ENCODE measurements at regions of chr12 and their contacts with region 1.

Region 1: GRCh38 chr12:52582971-52583456 is 9.4 kb upstream of the KRT74 start:
- DNase-seq: peak; percentile 52 to 64 (median 62)
- H3K4me3 ChIP-seq: no peak overlapping the region
- H3K4me3 Mint-ChIP-seq: peak overlapping the region in 2 of 8 donors; percentile 27 to 36
- H3K27ac ChIP-seq: no peak overlapping the region
- H3K27ac Mint-ChIP-seq: peak overlapping the region; percentile 8 to 95 (median 73)
- H3K4me1 ChIP-seq: peaks cover 25% of the 10 kb centered on the region
- H3K4me1 Mint-ChIP-seq: peaks cover 19 to 49% (median 27%) of the 10 kb centered on the region in 4 donors
- H3K27me3 ChIP-seq: no peaks in the 10 kb centered on the region
- H3K27me3 Mint-ChIP-seq: no peaks in the 10 kb centered on the region

Region 2: DNA sequence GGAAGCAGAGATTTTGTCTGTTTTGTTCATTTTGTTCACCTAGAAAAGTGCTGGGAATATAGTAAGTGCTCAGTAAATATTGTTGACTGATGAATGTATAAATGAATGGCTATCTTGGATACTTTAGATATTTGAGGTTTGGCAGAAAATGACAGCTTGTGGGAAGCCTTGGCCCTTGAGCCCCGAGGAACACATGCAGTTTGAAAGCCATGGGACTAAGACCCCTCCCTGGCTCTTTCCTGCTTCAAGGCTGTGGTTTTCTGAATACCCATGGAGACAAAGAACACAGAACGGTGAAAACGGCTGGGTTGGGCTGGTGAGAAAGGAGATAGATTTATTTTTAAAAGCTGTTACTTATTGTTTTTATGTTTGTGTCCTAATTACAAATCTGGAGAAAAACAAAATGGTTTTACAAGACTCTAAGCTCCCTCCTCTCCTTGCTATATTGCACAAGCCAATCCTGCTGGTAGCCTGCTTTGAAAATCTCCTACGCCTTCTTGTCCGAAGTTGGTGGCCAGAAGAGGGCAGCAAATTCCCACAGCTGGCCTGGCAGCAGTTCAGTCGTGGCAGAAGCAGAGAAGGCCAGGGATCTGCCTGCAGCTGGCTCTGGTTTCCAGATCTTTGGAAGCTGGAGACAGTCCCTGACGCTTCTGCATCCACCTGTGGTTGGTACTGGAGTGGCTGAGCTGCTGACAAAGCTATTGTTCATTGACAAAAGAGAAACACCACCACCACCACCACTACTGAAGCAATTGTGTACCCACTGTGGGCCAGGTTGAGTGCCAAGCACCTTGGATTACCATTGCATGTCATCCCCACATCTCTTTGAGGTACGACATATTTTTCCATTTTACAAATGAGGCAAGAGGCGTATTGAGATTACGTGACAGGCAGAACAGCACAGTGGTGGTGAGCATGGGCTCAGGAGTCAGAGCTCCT is 210.5 kb before region 1 on chr12:
- CTCF ChIA-PET with region 1: no interaction called
- POLR2A ChIA-PET with region 1: no interaction called
- intact Hi-C with region 1: loop called (anchors 5 kb)
- DNase-seq: peak in 3 of 5 donors; percentile 35 to 39 (median 37)
- H3K4me3 ChIP-seq: no peak overlapping the region
- H3K4me3 Mint-ChIP-seq: no peak overlapping the region
- H3K27ac ChIP-seq: no peak overlapping the region
- H3K27ac Mint-ChIP-seq: no peak overlapping the region
- H3K4me1 ChIP-seq: no peaks in the 10 kb centered on the region
- H3K4me1 Mint-ChIP-seq: no peaks in the 10 kb centered on the region
- H3K27me3 ChIP-seq: no peaks in the 10 kb centered on the region
- H3K27me3 Mint-ChIP-seq: peaks cover 7 to 23% of the 10 kb centered on the region in 2 donors

Region 3: GRCh38 chr12:52522346-52523011 is 60.5 kb before region 1 on chr12:
- CTCF ChIA-PET with region 1: no interaction called
- POLR2A ChIA-PET with region 1: no interaction called
- intact Hi-C with region 1: no loop called
- DNase-seq: no peak
- H3K4me3 ChIP-seq: no peak overlapping the region
- H3K4me3 Mint-ChIP-seq: no peak overlapping the region
- H3K27ac ChIP-seq: no peak overlapping the region
- H3K27ac Mint-ChIP-seq: no peak overlapping the region
- H3K4me1 ChIP-seq: no peaks in the 10 kb centered on the region
- H3K4me1 Mint-ChIP-seq: no peaks in the 10 kb centered on the region
- H3K27me3 ChIP-seq: no peaks in the 10 kb centered on the region
- H3K27me3 Mint-ChIP-seq: peaks cover 2 to 4% of the 10 kb centered on the region in 2 donors

Region 4: GRCh38 chr12:52555577-52555976 is 27.4 kb before region 1 on chr12:
- CTCF ChIA-PET with region 1: no interaction called
- POLR2A ChIA-PET with region 1: no interaction called
- intact Hi-C with region 1: no loop called
- DNase-seq: peak in 4 of 5 donors; percentile 5 to 19 (median 12)
- H3K4me3 ChIP-seq: no peak overlapping the region
- H3K4me3 Mint-ChIP-seq: no peak overlapping the region
- H3K27ac ChIP-seq: no peak overlapping the region
- H3K27ac Mint-ChIP-seq: no peak overlapping the region
- H3K4me1 ChIP-seq: no peaks in the 10 kb centered on the region
- H3K4me1 Mint-ChIP-seq: peaks cover 0 to 14% (median 8%) of the 10 kb centered on the region in 4 donors
- H3K27me3 ChIP-seq: no peaks in the 10 kb centered on the region
- H3K27me3 Mint-ChIP-seq: peaks cover 9 to 10% of the 10 kb centered on the region in 2 donors

Region 5: GRCh38 chr12:52615208-52615868 is 32.3 kb after region 1 on chr12:
- CTCF ChIA-PET with region 1: interaction called, 61 read pairs
- POLR2A ChIA-PET with region 1: interaction called, 54 read pairs
- intact Hi-C with region 1: loop called (anchors 1 kb)
- DNase-seq: peak in 2 of 5 donors; percentile 12 to 26
- H3K4me3 ChIP-seq: no peak overlapping the region
- H3K4me3 Mint-ChIP-seq: peak overlapping the region in 7 of 8 donors; percentile 2 to 56 (median 21)
- H3K27ac ChIP-seq: no peak overlapping the region
- H3K27ac Mint-ChIP-seq: peak overlapping the region; percentile 49 to 96 (median 83)
- H3K4me1 ChIP-seq: peaks cover 53% of the 10 kb centered on the region
- H3K4me1 Mint-ChIP-seq: peaks cover 15 to 70% (median 44%) of the 10 kb centered on the region in 4 donors
- H3K27me3 ChIP-seq: no peaks in the 10 kb centered on the region
- H3K27me3 Mint-ChIP-seq: peaks cover 2 to 11% of the 10 kb centered on the region in 2 donors

Region 6: DNA sequence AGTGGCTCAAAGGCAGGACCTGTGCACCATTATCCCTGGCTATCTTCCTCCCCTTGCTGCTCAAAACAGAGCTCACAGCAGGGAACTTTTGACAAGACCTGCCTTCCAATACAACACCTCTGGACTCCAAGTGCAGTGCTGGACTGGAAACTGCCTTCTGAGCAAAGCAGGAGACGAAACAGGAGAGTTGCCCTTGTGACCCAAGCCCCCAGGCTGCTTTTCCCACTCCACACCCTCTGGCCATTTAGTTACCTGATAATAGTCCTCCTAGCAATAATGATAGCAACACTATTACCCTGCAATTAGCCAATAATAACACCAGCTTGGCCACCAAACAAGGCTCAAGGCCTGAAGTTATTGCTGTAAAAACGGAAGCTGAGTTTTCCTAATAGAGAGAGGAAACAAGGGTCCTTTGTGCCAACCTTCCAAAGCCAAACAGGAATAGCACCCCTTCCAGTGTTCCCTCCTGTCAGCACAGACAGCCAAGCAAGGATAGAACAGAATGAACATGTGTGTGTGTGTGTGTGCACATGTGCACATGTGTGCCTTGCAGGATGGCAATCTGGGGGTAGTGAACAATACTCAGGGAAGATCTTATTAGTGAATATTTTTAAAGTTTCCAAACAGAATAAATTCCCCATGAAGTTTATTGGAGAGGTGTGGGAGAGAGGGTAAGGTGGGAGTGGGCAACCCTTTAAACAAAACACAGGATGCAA is 44.5 kb after region 1 on chr12:
- CTCF ChIA-PET with region 1: no interaction called
- POLR2A ChIA-PET with region 1: no interaction called
- intact Hi-C with region 1: no loop called
- DNase-seq: no peak
- H3K4me3 ChIP-seq: no peak overlapping the region
- H3K4me3 Mint-ChIP-seq: no peak overlapping the region
- H3K27ac ChIP-seq: no peak overlapping the region
- H3K27ac Mint-ChIP-seq: peak overlapping the region in 1 of 7 donors; percentile 25
- H3K4me1 ChIP-seq: peaks cover 11% of the 10 kb centered on the region
- H3K4me1 Mint-ChIP-seq: peaks cover 9 to 51% (median 25%) of the 10 kb centered on the region in 4 donors
- H3K27me3 ChIP-seq: no peaks in the 10 kb centered on the region
- H3K27me3 Mint-ChIP-seq: peaks cover 0 to 3% of the 10 kb centered on the region in 2 donors

Region 7: GRCh38 chr12:52691076-52691840 is 108.2 kb after region 1 on chr12:
- CTCF ChIA-PET with region 1: interaction called, 3 read pairs
- POLR2A ChIA-PET with region 1: interaction called, 5 read pairs
- intact Hi-C with region 1: loop called (anchors 2 kb)
- DNase-seq: peak; percentile 49 to 57 (median 55)
- H3K4me3 ChIP-seq: peak overlapping the region; percentile 46 to 49
- H3K4me3 Mint-ChIP-seq: peak overlapping the region; percentile 89 to 95 (median 94)
- H3K27ac ChIP-seq: no peak overlapping the region
- H3K27ac Mint-ChIP-seq: peak overlapping the region in 6 of 7 donors; percentile 58 to 89 (median 84)
- H3K4me1 ChIP-seq: peaks cover 15% of the 10 kb centered on the region
- H3K4me1 Mint-ChIP-seq: peaks cover 11 to 39% (median 23%) of the 10 kb centered on the region in 4 donors
- H3K27me3 ChIP-seq: no peaks in the 10 kb centered on the region
- H3K27me3 Mint-ChIP-seq: peaks cover 2 to 19% of the 10 kb centered on the region in 2 donors

Region 8: GRCh38 chr12:52741392-52742195 is 158.6 kb after region 1 on chr12:
- CTCF ChIA-PET with region 1: no interaction called
- POLR2A ChIA-PET with region 1: no interaction called
- intact Hi-C with region 1: no loop called
- DNase-seq: peak in 4 of 5 donors; percentile 28 to 49 (median 34)
- H3K4me3 ChIP-seq: no peak overlapping the region
- H3K4me3 Mint-ChIP-seq: no peak overlapping the region
- H3K27ac ChIP-seq: no peak overlapping the region
- H3K27ac Mint-ChIP-seq: no peak overlapping the region
- H3K4me1 ChIP-seq: no peaks in the 10 kb centered on the region
- H3K4me1 Mint-ChIP-seq: no peaks in the 10 kb centered on the region
- H3K27me3 ChIP-seq: no peaks in the 10 kb centered on the region
- H3K27me3 Mint-ChIP-seq: peaks cover 9 to 21% of the 10 kb centered on the region in 2 donors

Region 9: DNA sequence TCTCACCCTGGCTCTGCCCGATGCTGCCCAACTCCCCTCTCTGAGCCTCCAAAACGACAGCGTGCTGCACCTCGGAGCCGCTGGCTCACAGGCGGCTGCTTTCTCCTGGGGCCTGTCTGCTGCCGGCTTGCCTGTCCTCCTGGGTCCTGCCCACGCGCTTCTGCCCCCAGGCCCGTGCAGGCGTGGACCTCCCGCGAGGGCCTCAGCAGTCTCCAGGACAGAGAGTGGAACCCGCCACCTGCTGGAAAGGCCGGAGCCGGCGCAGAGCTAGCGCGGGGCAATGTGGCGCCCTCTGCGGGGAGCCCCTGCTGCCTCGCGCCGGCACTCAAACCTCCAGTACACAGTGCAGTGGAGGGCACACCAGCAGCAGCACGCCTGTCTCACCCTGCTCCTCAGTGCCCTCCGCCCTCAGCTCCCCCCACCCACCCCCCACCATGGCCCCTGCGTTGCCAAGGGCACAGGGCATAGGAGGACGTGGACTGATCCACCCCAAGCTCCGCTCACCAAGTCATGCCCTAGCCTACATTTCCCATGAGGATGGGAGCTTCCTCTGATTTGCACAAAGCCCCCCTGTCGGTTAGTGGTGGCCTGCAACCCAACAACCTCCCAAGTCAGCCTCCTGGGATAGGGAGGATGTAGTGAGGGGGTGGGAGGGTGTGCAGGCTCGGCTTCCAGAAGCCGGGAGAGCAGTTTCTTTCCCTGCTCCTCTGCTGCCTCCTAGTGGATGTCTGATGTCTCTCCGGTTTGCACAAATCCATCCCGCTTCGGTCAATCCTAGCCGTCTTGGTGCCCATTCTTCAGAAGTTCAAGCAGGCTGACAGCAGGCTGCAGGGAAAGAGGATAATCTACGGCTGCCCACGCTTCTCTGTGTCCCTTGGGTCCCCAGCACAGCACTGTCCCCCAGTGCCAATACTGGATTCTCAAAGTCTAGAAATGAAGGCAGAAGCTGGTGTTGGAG is 296.7 kb after region 1 on chr12:
- CTCF ChIA-PET with region 1: interaction called, 317 read pairs
- POLR2A ChIA-PET with region 1: interaction called, 14 read pairs
- intact Hi-C with region 1: loop called (anchors 1 kb)
- DNase-seq: peak; percentile 65 to 70 (median 67)
- H3K4me3 ChIP-seq: no peak overlapping the region
- H3K4me3 Mint-ChIP-seq: peak overlapping the region; percentile 48 to 85 (median 73)
- H3K27ac ChIP-seq: no peak overlapping the region
- H3K27ac Mint-ChIP-seq: peak overlapping the region in 1 of 7 donors; percentile 52
- H3K4me1 ChIP-seq: peaks cover 8% of the 10 kb centered on the region
- H3K4me1 Mint-ChIP-seq: peaks cover 3 to 14% (median 10%) of the 10 kb centered on the region in 4 donors
- H3K27me3 ChIP-seq: no peaks in the 10 kb centered on the region
- H3K27me3 Mint-ChIP-seq: peaks cover 2 to 9% of the 10 kb centered on the region in 2 donors

Measured in CD4-positive, alpha-beta memory T cell (primary cell).